Caco-2 (cell line): ENCODE measurements at regions of chr5 and their contacts with region 1.

Region 1: DNA sequence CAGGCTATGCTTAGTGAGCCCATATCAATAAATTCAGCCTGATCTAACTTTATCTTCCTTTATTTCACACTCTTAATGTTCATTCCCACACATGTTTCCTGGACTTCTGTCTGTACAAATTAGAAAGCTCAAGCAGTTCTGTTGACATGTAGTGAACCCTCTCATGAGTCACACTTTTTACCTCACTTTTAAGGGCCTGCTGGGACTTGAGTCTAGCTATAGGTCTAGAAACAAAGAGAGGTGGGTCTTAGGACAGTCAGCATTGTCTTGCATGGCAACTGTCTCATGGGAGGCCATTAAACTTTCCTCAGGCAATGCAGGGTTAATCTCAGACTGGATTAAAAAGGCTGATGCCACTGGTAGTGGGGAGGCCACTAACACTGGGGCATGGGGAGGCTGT is 8.6 kb upstream of the CCNH start:
- DNase-seq: no peak
- H3K4me3 ChIP-seq: no peak overlapping the region
- H3K4me3 Mint-ChIP-seq: no peak overlapping the region
- H3K27ac Mint-ChIP-seq: no peak overlapping the region
- H3K4me1 ChIP-seq: no peaks in the 10 kb centered on the region
- H3K4me1 Mint-ChIP-seq: no peaks in the 10 kb centered on the region
- H3K27me3 ChIP-seq: no peaks in the 10 kb centered on the region; the same call in 1 of the 2 replicates
- H3K27me3 Mint-ChIP-seq: peaks cover 6% of the 10 kb centered on the region
- CTCF ChIP-seq: no peak

Region 2: DNA sequence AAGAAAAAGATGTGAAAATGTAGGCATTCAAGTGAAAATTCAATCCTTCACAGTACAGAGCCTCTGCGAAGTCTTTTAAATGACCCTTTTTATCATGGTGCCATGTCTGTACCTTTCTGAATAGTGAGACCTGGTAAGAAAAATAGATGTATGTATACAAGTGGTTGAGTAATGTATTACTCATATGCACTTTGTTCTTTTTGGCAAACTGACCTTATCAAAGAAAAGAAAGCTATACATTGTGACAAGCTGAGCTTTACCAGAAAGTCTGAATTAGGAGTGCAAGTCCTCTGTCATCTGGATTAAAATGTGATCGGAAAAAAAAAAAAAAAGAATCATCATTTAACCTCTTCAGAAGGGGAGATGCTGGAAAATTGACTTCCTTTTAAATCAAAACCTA is 347.9 kb after region 1 on chr5:
- CTCF ChIA-PET with region 1: no interaction called
- POLR2A ChIA-PET with region 1: no interaction called
- intact Hi-C with region 1: loop called (anchors 10 kb)
- DNase-seq: no peak
- H3K4me3 ChIP-seq: no peak overlapping the region
- H3K4me3 Mint-ChIP-seq: no peak overlapping the region
- H3K27ac Mint-ChIP-seq: no peak overlapping the region
- H3K4me1 ChIP-seq: no peaks in the 10 kb centered on the region
- H3K4me1 Mint-ChIP-seq: no peaks in the 10 kb centered on the region
- H3K27me3 ChIP-seq: no peaks in the 10 kb centered on the region
- H3K27me3 Mint-ChIP-seq: peaks cover 10% of the 10 kb centered on the region
- CTCF ChIP-seq: no peak

Region 3: GRCh38 chr5:88690409-88691229 is 1269.3 kb after region 1 on chr5:
- CTCF ChIA-PET with region 1: no interaction called
- POLR2A ChIA-PET with region 1: no interaction called
- intact Hi-C with region 1: loop called (anchors 10 kb)
- DNase-seq: peak; percentile 50 to 63
- H3K4me3 ChIP-seq: no peak overlapping the region
- H3K4me3 Mint-ChIP-seq: peak overlapping the region; percentile 67
- H3K27ac Mint-ChIP-seq: no peak overlapping the region
- H3K4me1 ChIP-seq: no peaks in the 10 kb centered on the region
- H3K4me1 Mint-ChIP-seq: peaks cover 8% of the 10 kb centered on the region
- H3K27me3 ChIP-seq: peaks cover 10% of the 10 kb centered on the region
- H3K27me3 Mint-ChIP-seq: peaks cover 48% of the 10 kb centered on the region
- CTCF ChIP-seq: peak; percentile 93 to 95